ENCODE measurements at regions of chr19 and their contacts with region 1.

Region 1: DNA sequence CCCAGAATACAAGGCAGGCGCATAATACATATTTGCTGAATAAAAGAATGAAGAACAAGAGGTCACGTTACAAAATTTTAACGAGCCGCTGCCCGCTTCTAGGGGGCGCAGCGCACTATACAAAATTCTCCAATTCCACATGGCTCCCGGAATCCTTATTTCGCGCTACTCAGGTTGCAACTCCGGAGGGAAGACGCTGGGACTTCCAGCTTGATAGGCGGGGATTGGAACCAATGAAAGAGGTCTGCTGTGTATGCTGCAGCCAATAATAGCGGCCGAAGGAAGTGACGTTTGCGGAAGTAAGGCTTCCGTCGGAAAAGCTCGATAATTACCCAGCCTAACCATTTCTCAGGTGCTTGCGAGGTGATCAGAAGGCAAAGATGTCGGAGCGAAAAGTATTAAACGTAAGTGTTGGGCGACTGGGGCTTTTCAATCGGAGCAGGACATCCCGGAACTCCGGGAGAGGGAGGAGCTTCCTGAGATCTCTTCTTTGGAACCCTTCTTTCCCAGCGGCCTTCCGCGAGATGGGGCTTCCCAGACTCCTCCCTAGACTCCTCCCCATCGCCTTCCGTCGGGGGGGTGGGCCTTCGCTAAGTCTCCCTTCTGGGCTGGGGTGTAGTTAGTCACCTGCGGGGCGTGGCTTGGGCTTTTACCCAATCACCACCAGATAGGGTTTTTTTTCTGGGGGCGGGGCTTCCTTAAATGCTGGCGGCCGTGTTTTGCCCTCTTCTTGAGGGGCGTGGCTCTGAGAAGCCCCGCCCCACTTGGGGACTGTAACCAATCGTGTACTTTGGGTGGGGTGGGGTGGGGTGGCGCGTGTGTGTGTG is at the start of gene YJU2:
- DNase-seq: peak; percentile 99
- H3K4me3 ChIP-seq: peak within 1 kb of the TSS; percentile 60 to 79 (median 66)
- H3K27ac ChIP-seq: peak within 1 kb of the TSS; percentile 93 to 96 (median 94)
- H3K4me1 ChIP-seq: peaks cover 0 to 13% (median 12%) of the 10 kb centered on the region in 4 donors
- H3K27me3 ChIP-seq: no peaks in the 10 kb centered on the region
- CTCF ChIP-seq: no peak
- EP300 ChIP-seq: no peak
- POLR2A ChIP-seq: no peak
- total RNA-seq, gene YJU2: 19.4 to 22.5 (median 20.8) TPM

Region 2: GRCh38 chr19:4164262-4164661 is 82.7 kb before region 1 on chr19:
- intact Hi-C with region 1: no loop called
- DNase-seq: no peak
- H3K4me3 ChIP-seq: no peak overlapping the region
- H3K27ac ChIP-seq: no peak overlapping the region
- H3K4me1 ChIP-seq: no peaks in the 10 kb centered on the region
- H3K27me3 ChIP-seq: peaks cover 0 to 19% (median 0%) of the 10 kb centered on the region in 3 donors
- CTCF ChIP-seq: no peak
- EP300 ChIP-seq: no peak
- POLR2A ChIP-seq: no peak

Region 3: GRCh38 chr19:4328243-4328990 is 81.4 kb after region 1 on chr19:
- intact Hi-C with region 1: loop called (anchors 5 kb)
- DNase-seq: peak; percentile 99
- H3K4me3 ChIP-seq: peak overlapping the region; percentile 21 to 44 (median 33)
- H3K27ac ChIP-seq: peak overlapping the region in 2 of 4 donors; percentile 2 to 60
- H3K4me1 ChIP-seq: peaks cover 0 to 27% (median 20%) of the 10 kb centered on the region in 4 donors
- H3K27me3 ChIP-seq: peaks cover 6 to 38% (median 13%) of the 10 kb centered on the region in 3 donors
- CTCF ChIP-seq: no peak
- EP300 ChIP-seq: no peak
- POLR2A ChIP-seq: no peak

Region 4: DNA sequence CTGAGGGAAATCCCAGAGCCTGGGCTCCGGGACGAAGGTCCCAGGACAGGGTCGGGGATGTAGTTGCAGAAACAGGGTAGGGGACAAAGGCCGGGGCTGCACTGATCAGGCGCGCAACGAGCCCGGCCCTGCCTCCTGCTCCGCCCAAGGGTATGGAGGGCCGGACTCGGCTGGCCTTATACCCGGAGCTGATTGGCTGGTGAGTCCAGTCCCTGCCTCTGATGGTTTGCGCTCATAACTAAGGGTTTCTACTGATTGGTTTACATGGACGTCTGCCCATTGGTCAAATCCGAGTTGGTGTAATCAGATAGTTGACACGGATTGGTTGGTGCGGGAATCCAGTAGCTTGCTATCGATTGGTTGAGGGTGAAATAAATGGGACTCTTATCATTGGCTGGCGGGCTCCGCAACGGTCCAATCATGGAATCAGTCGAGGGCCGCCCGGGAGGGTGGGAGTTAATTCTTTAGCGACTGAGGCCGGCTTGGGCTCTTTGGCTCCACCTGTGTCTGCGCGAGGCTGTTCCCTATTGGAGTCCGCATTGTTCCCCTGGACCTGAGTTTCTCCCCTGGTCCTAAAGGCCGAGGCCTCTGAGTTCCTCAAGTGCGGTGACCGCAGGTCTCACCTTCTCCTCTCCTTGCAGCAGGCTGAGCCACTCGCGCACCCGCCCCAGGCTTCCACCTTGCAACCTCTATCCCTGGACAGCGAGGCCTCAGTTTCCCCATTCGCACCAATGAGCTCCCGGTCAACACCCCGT is 95.8 kb after region 1 on chr19:
- intact Hi-C with region 1: loop called (anchors 5 kb)
- DNase-seq: peak; percentile 99
- H3K4me3 ChIP-seq: peak overlapping the region; percentile 64 to 90 (median 82)
- H3K27ac ChIP-seq: peak overlapping the region; percentile 95 to 99 (median 96)
- H3K4me1 ChIP-seq: peaks cover 0 to 21% (median 18%) of the 10 kb centered on the region in 4 donors
- H3K27me3 ChIP-seq: no peaks in the 10 kb centered on the region
- CTCF ChIP-seq: peak in 1 of 4 experiments; percentile 21
- EP300 ChIP-seq: no peak
- POLR2A ChIP-seq: peak; percentile 92 to 93

Region 5: GRCh38 chr19:4400135-4400936 is 153.4 kb after region 1 on chr19 and contains the start of gene SH3GL1:
- intact Hi-C with region 1: loop called (anchors 2 kb)
- DNase-seq: peak; percentile 98
- H3K4me3 ChIP-seq: peak within 1 kb of the TSS; percentile 91 to 98 (median 96)
- H3K27ac ChIP-seq: peak within 1 kb of the TSS; percentile 94 to 97 (median 96)
- H3K4me1 ChIP-seq: peaks cover 0 to 58% (median 55%) of the 10 kb centered on the region in 4 donors
- H3K27me3 ChIP-seq: no peaks in the 10 kb centered on the region
- CTCF ChIP-seq: peak; percentile 77 to 97 (median 88)
- EP300 ChIP-seq: peak in 1 of 4 donors; percentile 17
- POLR2A ChIP-seq: no peak
- total RNA-seq, gene SH3GL1: 28.5 to 33.9 (median 32.2) TPM

Region 6: DNA sequence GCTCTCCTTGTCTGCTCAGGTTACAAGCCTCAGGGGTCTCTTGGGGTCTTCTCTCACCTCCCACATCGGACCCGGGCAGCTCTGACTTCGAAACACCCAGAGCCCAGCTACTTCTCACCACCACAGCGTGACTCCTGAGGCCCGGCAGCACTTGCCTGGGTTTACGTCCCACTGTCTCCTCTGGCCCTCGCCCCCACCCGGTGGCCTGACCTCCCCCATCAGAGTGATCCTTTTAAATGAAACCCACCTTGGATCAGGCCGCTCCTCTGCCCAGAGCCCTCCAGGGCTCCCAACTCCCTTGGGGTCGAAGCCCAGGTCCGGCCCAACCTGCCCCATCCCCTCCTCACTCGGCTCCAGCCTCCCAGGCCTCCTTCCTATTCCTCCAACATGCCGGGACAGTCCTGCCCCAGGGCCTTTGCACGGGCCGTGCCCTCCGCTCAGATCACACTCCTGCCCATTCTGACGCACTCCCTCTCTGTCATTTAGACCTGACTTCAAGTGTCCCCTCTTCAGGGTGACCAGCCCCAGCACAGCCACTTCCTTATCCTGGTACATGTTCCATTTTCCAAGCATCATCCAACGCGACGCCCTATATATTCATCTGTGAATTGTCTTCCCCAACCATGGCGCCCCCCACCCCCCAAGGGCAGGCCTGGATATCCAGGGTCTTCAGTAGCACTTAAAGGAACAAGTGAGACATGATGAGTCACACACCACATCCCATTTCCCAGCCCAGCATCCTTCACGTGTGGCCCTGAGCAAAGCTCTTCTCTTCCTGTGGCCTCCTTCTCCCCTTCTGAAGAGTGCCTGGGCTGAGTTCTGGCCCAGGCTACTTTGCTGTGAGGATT is 259.1 kb after region 1 on chr19:
- intact Hi-C with region 1: no loop called
- DNase-seq: no peak
- H3K4me3 ChIP-seq: no peak overlapping the region
- H3K27ac ChIP-seq: peak overlapping the region in 3 of 4 donors; percentile 42 to 66 (median 63)
- H3K4me1 ChIP-seq: peaks cover 0 to 57% (median 36%) of the 10 kb centered on the region in 4 donors
- H3K27me3 ChIP-seq: no peaks in the 10 kb centered on the region
- CTCF ChIP-seq: no peak
- EP300 ChIP-seq: no peak
- POLR2A ChIP-seq: no peak

Region 7: GRCh38 chr19:4524808-4525562 is 278.0 kb after region 1 on chr19:
- intact Hi-C with region 1: loop called (anchors 5 kb)
- DNase-seq: no peak
- H3K4me3 ChIP-seq: no peak overlapping the region
- H3K27ac ChIP-seq: no peak overlapping the region
- H3K4me1 ChIP-seq: peaks cover 0 to 11% (median 2%) of the 10 kb centered on the region in 4 donors
- H3K27me3 ChIP-seq: no peaks in the 10 kb centered on the region
- CTCF ChIP-seq: peak in 3 of 4 experiments; percentile 27 to 73 (median 47)
- EP300 ChIP-seq: no peak
- POLR2A ChIP-seq: no peak